Heart right ventricle (tissue), 16 donors: ENCODE measurements at regions of chr13 and their contacts with region 1.

Region 1: DNA sequence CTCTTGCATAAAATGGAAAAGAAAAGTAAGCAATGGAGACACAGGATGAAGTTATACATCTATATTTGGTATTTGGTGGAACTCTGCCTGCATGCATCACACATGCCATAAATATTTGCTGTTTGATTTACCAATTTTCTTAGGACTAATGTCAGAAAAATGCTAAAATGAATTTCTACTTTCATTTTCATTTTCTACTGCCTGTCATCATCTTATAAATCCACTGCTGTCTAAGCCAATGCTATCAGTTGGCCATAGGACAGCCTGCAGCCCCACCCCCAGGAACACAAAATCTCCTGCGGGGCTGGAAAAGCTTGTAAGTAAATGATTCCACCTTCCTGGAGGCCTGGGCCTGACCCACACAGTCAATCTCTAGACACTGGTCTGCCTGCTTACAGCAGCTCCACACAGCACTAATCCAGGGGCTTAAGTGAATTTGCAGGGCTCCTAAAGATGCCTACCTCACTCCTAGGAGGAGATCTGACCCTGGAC is 122.0 kb downstream of the ENOX1 start:
- DNase-seq: peak in 1 of 2 donors; percentile 9
- ATAC-seq: peak in 7 of 8 donors; percentile 20 to 69 (median 62)
- H3K4me3 ChIP-seq: peak overlapping the region in 3 of 10 donors; percentile 1 to 17 (median 1)
- H3K27ac ChIP-seq: peak overlapping the region in 7 of 10 donors; percentile 1 to 41 (median 37)
- H3K4me1 ChIP-seq: peaks cover 0 to 36% (median 26%) of the 10 kb centered on the region in 9 donors
- H3K27me3 ChIP-seq: no peaks in the 10 kb centered on the region
- CTCF ChIP-seq: peak in 1 of 9 donors; percentile 14

Region 2: GRCh38 chr13:43405457-43405856 is 259.3 kb before region 1 on chr13:
- intact Hi-C with region 1: no loop called
- DNase-seq: no peak
- ATAC-seq: no peak
- H3K4me3 ChIP-seq: no peak overlapping the region
- H3K27ac ChIP-seq: no peak overlapping the region
- H3K4me1 ChIP-seq: no peaks in the 10 kb centered on the region
- H3K27me3 ChIP-seq: no peaks in the 10 kb centered on the region
- CTCF ChIP-seq: no peak

Region 3: DNA sequence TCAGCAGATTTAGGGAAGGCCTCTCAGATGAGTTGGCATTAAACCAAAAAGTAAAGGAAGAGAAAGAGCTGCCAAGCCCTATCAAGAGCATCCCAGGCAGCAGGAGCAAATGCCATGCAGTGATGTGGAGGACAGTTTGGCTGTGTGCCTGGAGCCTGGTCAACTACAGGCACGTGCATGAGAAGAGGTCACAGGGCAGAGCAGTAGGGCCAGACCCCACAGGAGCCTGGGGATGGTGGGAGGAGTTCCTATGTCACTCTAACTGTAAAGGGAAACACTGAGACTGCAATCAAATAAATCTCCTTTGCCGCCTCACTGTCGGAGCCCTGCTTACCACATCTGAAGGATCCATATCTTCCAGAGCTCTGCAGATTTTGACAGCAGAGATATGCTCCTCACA is 118.5 kb before region 1 on chr13:
- intact Hi-C with region 1: loop called in 1 of 10 experiments (anchors 5 kb)
- DNase-seq: peak; percentile 46 to 65
- ATAC-seq: peak; percentile 58 to 89 (median 64)
- H3K4me3 ChIP-seq: no peak overlapping the region
- H3K27ac ChIP-seq: no peak overlapping the region
- H3K4me1 ChIP-seq: peaks cover 0 to 40% (median 31%) of the 10 kb centered on the region in 9 donors
- H3K27me3 ChIP-seq: no peaks in the 10 kb centered on the region
- CTCF ChIP-seq: no peak